Breast epithelium (tissue), 4 donors: ENCODE measurements at regions of chr1 and their contacts with region 1.

Region 1: DNA sequence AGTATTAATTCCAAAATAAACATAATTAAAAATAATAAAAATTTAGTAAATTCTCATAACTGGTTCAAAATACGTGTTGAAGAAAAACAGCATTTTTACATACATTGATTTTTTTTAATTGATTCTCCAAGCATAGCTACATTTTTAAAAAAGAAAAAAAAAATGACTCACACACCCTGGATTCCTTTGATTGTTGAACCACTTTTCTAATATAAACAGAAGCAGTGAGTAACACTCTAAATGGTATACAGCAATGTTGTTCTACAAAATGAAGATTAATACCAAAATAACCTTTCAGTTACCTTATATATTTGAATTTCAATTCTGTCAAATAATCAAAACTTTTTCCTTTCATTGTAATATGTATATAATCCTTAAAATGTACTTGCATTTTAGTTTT is 246.6 kb upstream of the NR5A2 start:
- DNase-seq: no peak
- H3K4me3 ChIP-seq: no peak overlapping the region
- H3K27ac ChIP-seq: no peak overlapping the region
- H3K4me1 ChIP-seq: no peaks in the 10 kb centered on the region
- H3K27me3 ChIP-seq: no peaks in the 10 kb centered on the region
- CTCF ChIP-seq: no peak
- POLR2A ChIP-seq: no peak

Region 2: GRCh38 chr1:199808110-199808870 is 27.3 kb after region 1 on chr1:
- intact Hi-C with region 1: no loop called
- DNase-seq: no peak
- H3K4me3 ChIP-seq: no peak overlapping the region
- H3K27ac ChIP-seq: no peak overlapping the region
- H3K4me1 ChIP-seq: no peaks in the 10 kb centered on the region
- H3K27me3 ChIP-seq: no peaks in the 10 kb centered on the region
- CTCF ChIP-seq: no peak
- POLR2A ChIP-seq: no peak

Region 3: GRCh38 chr1:200224315-200224714 is 443.4 kb after region 1 on chr1:
- intact Hi-C with region 1: loop called (anchors 5 kb)
- DNase-seq: no peak
- H3K4me3 ChIP-seq: no peak overlapping the region
- H3K27ac ChIP-seq: no peak overlapping the region
- H3K4me1 ChIP-seq: no peaks in the 10 kb centered on the region
- H3K27me3 ChIP-seq: peaks cover 0 to 4% of the 10 kb centered on the region in 2 donors
- CTCF ChIP-seq: no peak
- POLR2A ChIP-seq: no peak